Activated CD8-positive, alpha-beta T cell treated with anti-CD3 and anti-CD28 coated beads, Interleukin-2, amount 10 ng/mL, durations not matched to agents 7 days and 5 days (primary cell): ENCODE measurements at regions of chr3 and their contacts with region 1.

Region 1: DNA sequence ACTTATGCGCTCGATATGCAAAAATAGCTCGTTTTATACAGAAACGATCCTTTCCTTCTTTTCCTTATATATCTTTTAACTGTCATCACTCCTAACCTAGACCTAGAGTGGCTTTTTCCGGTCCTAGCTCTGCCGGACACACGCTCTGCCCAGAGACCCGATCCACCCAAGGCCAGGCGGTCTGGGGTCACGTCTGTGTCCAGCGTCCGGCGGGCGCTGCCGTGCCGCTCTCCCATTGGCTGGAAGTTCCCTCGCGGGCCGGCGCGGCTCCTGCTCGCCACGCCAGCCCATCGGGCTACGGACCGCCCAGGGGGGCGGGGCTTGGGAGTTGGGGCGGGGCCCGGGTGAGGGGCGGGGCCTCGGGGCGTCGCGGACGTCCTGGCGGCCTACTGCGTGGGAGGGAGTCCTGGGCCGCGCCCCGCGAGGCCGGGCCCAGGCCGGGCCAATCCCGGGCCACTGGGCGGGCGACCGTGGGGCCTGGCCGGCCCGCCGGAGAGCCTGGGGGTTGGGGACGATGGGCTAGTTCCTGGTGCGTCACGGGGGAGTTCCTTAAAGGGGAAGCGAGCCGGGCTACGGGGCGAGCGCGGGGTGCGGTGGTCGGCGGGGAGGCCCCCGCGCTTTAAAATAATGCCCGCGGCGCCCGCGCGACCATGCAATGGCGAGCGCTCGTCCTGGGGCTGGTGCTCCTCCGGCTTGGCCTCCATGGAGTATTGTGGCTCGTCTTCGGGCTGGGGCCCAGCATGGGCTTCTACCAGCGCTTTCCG is at the start of gene EDEM1:
- DNase-seq: peak; percentile 94
- ATAC-seq: peak; percentile 95
- H3K4me3 Mint-ChIP-seq: peak within 1 kb of the TSS; percentile 96
- H3K27ac Mint-ChIP-seq: peak within 1 kb of the TSS; percentile 99
- H3K4me1 Mint-ChIP-seq: peaks cover 31% of the 10 kb centered on the region
- H3K27me3 Mint-ChIP-seq: no peaks in the 10 kb centered on the region
- total RNA-seq, gene EDEM1: 81.7 to 84.3 TPM

Region 2: GRCh38 chr3:5122030-5122740 is 65.2 kb before region 1 on chr3 and contains the start of gene ARL8B:
- CTCF ChIA-PET with region 1: interaction called, 10 read pairs
- POLR2A ChIA-PET with region 1: interaction called, 25 read pairs
- DNase-seq: peak; percentile 93
- ATAC-seq: peak; percentile 97
- H3K4me3 Mint-ChIP-seq: peak within 1 kb of the TSS; percentile 95
- H3K27ac Mint-ChIP-seq: peak within 1 kb of the TSS; percentile 91
- H3K4me1 Mint-ChIP-seq: peaks cover 29% of the 10 kb centered on the region
- H3K27me3 Mint-ChIP-seq: no peaks in the 10 kb centered on the region
- total RNA-seq, gene ARL8B: 41.0 to 44.0 TPM

Region 3: GRCh38 chr3:5260992-5261501 is 73.7 kb after region 1 on chr3:
- CTCF ChIA-PET with region 1: no interaction called
- POLR2A ChIA-PET with region 1: no interaction called
- DNase-seq: no peak
- ATAC-seq: no peak
- H3K4me3 Mint-ChIP-seq: no peak overlapping the region
- H3K27ac Mint-ChIP-seq: no peak overlapping the region
- H3K4me1 Mint-ChIP-seq: peaks cover 3% of the 10 kb centered on the region
- H3K27me3 Mint-ChIP-seq: no peaks in the 10 kb centered on the region